Gastrocnemius medialis (tissue), 4 donors: ENCODE measurements at regions of chr22 and their contacts with region 1.

Region 1: DNA sequence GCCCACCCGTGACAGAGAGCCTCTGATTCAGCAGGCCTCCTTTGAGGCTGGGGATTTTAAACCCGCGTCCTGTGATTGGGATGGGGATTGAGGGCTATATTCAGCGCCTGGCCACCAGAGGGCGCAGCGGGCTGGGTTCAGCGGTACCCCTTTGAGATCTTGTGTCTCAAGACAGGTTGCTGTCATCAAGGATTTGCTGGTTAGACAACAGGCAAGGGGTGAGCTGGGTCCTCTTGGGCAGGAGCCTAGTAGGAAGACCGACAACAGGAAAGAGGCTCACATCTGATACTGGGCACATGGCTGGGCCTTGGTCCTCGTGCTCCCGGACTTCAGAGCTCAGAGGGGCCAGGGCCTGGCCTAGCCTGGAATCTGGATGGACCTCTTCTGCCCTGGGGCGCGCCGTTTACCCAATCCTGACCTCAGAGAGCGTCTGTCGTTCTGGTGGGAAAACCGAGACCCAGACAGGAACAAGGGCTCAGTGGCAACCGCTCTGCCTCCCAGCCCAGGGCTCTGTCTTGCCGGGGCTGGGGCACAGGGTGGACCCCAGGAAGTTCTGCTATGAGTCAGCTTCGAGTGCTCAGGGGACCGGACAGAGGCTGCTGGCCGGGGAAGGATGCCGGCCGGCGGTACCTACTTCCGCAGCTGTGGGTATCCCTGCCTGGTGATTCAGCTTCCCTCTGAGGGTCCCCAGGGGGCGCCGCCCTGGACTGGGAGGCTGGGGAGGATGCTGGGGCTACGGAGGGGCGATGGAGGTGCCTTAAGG is 929 bp upstream of the SLC35E4 start:
- DNase-seq: peak; percentile 78 to 85
- ATAC-seq: peak; percentile 75 to 77
- H3K4me3 ChIP-seq: peak overlapping the region; percentile 67 to 96 (median 78)
- H3K27ac ChIP-seq: peak overlapping the region; percentile 95 to 99 (median 98)
- H3K4me1 ChIP-seq: peaks cover 36 to 39% of the 10 kb centered on the region in 2 donors
- H3K27me3 ChIP-seq: no peaks in the 10 kb centered on the region
- CTCF ChIP-seq: peak; percentile 95 to 99 (median 97)
- POLR2A ChIP-seq: peak in 1 of 2 donors; percentile 54

Region 2: GRCh38 chr22:30089655-30089974 is 545.0 kb before region 1 on chr22:
- in situ Hi-C with region 1: no loop called
- intact Hi-C with region 1: no loop called
- DNase-seq: no peak
- ATAC-seq: peak; percentile 36 to 45
- H3K4me3 ChIP-seq: no peak overlapping the region
- H3K27ac ChIP-seq: no peak overlapping the region
- H3K4me1 ChIP-seq: peaks cover 0 to 7% of the 10 kb centered on the region in 2 donors
- H3K27me3 ChIP-seq: peaks cover 0 to 10% (median 2%) of the 10 kb centered on the region in 3 donors
- CTCF ChIP-seq: no peak
- POLR2A ChIP-seq: no peak

Region 3: GRCh38 chr22:30591588-30592359 is 42.9 kb before region 1 on chr22 and contains the start of gene PES1:
- in situ Hi-C with region 1: no loop called
- intact Hi-C with region 1: loop called (anchors 2 kb)
- DNase-seq: peak; percentile 90 to 94
- ATAC-seq: peak; percentile 100
- H3K4me3 ChIP-seq: peak within 1 kb of the TSS; percentile 62 to 94 (median 90)
- H3K27ac ChIP-seq: peak within 1 kb of the TSS; percentile 78 to 94 (median 86)
- H3K4me1 ChIP-seq: peaks cover 13 to 19% of the 10 kb centered on the region in 2 donors
- H3K27me3 ChIP-seq: no peaks in the 10 kb centered on the region
- CTCF ChIP-seq: no peak
- POLR2A ChIP-seq: peak; percentile 44 to 59
- total RNA-seq, gene PES1: 56.3 to 72.0 (median 65.8) TPM

Region 4: DNA sequence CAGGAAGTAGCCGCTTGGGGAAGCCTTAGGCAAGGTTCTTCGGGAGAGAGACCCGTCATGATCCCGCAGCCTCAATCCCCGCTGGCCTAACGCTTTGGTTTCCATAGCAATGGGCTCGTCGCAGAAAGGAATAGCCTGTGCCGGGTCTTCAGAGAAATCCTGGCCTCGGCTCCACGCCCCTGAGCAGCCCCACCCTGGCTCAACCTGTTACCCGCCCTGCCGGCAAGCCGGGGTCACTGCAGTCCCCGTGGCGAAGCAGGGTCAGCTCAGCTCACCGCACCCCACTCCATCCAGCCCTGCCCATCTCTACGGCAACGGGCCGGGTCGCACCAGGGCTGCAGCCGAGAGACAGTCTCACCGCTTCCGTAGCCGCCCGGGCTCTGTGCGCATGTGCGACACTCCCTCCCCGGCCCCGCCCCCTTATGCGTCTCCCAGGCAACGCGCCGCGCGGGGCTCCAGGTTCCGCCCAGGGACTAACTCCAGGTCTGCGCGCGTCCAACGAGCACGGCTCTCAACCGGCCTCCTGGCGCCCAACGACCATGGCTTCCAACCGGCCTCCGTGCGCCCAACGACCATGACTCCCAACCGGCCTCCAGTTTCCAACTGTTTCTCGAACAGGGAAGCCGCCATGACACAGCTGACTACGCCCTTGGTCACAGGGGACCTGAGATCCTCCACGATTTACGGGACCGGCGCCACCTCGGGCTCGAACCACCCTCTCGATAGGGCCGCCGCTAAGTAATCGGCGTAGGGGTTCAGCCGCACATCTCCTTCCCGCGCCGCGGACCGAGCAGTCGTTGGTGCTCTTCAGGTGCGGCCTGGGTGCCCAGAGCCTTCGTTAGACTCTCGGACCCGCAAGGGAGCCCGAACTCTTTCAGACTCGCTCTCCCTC is 33.1 kb after region 1 on chr22 and contains the start of gene DUSP18:
- in situ Hi-C with region 1: no loop called
- intact Hi-C with region 1: loop called (anchors 1 kb)
- DNase-seq: peak; percentile 85 to 88
- ATAC-seq: peak; percentile 97
- H3K4me3 ChIP-seq: peak within 1 kb of the TSS; percentile 64 to 94 (median 84)
- H3K27ac ChIP-seq: peak within 1 kb of the TSS; percentile 37 to 68 (median 52)
- H3K4me1 ChIP-seq: peaks cover 10 to 11% of the 10 kb centered on the region in 2 donors
- H3K27me3 ChIP-seq: no peaks in the 10 kb centered on the region
- CTCF ChIP-seq: peak; percentile 6 to 57 (median 37)
- POLR2A ChIP-seq: peak; percentile 16 to 33
- total RNA-seq, gene DUSP18: 0.82 to 4.3 (median 2.0) TPM

Region 5: DNA sequence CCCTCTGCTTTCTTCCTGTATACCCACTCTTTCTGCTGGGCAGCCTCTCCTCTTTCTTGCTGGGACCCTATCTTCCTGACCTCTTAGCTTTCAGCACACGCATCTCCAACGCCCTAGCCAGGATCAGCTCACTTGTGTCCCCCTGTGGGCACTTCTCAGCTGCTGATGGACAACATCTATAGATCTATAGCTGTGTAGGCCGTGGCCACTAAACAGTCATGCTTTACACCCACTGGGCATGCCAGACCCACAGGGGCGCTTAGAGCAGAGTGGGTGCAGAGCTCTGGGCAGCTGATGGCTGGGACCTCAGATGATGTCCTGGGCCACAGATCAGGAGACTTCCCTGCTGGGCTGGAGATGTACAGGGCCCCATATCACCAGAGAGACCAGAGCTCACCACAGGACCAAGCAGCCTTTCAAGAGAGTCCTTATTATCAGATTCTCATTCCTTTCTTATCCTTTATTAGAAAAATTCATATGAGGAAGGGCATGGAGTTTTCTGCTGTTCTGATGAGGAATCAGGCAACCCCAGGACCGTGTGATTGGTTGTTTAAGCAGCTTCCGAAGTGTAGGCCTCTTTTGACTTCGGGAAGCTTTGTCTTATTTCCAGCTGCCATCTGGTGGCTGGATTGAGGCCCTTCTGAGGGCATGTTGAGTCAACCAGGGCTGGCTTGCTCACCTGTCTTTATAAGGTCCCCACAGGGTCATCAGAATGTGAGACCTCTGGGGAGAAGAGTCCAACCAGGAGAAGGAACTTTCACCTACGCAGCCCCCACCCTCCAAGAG is 120.5 kb after region 1 on chr22:
- in situ Hi-C with region 1: loop called (anchors 5 kb)
- intact Hi-C with region 1: no loop called
- DNase-seq: peak; percentile 18 to 40
- ATAC-seq: peak; percentile 87 to 90
- H3K4me3 ChIP-seq: no peak overlapping the region
- H3K27ac ChIP-seq: no peak overlapping the region
- H3K4me1 ChIP-seq: no peaks in the 10 kb centered on the region
- H3K27me3 ChIP-seq: no peaks in the 10 kb centered on the region
- CTCF ChIP-seq: peak; percentile 46 to 78 (median 74)
- POLR2A ChIP-seq: no peak

Region 6: DNA sequence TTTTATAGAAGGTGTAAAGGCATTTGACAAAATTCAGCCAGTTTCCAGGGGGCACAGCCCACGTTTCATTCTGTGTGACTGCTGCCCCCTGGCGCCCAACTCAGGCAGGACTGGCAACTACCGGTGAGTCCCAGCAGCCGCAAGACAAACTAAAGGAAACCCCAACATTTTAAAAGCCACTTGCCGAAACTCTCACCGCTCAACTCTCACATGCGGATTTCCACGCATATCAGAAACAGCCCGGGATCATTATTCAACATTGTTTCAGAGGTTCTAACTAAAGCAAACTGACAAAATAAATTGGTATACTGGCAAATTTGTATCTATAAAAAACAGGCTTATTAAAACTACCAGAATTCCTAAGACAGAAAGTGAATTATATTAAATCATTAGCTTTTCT is 285.8 kb after region 1 on chr22:
- in situ Hi-C with region 1: loop called (anchors 10 to 25 kb)
- intact Hi-C with region 1: loop called (anchors 1 kb)
- DNase-seq: peak; percentile 32 to 49
- ATAC-seq: peak in 1 of 2 donors; percentile 54
- H3K4me3 ChIP-seq: peak overlapping the region in 1 of 4 donors; percentile 5
- H3K27ac ChIP-seq: no peak overlapping the region
- H3K4me1 ChIP-seq: peaks cover 0 to 13% of the 10 kb centered on the region in 2 donors
- H3K27me3 ChIP-seq: no peaks in the 10 kb centered on the region
- CTCF ChIP-seq: peak; percentile 65 to 92 (median 78)
- POLR2A ChIP-seq: no peak

Region 7: GRCh38 chr22:31080848-31081649 is 446.4 kb after region 1 on chr22 and contains the start of gene SMTN:
- in situ Hi-C with region 1: no loop called
- intact Hi-C with region 1: loop called (anchors 1 kb)
- DNase-seq: peak; percentile 83 to 88
- ATAC-seq: peak; percentile 82 to 83
- H3K4me3 ChIP-seq: peak within 1 kb of the TSS; percentile 60 to 78 (median 73)
- H3K27ac ChIP-seq: peak within 1 kb of the TSS; percentile 85 to 93 (median 92)
- H3K4me1 ChIP-seq: peaks cover 13 to 49% of the 10 kb centered on the region in 2 donors
- H3K27me3 ChIP-seq: no peaks in the 10 kb centered on the region
- CTCF ChIP-seq: no peak
- POLR2A ChIP-seq: peak; percentile 87 to 95
- total RNA-seq, gene SMTN: 39.5 to 104 (median 45.3) TPM

Region 8: DNA sequence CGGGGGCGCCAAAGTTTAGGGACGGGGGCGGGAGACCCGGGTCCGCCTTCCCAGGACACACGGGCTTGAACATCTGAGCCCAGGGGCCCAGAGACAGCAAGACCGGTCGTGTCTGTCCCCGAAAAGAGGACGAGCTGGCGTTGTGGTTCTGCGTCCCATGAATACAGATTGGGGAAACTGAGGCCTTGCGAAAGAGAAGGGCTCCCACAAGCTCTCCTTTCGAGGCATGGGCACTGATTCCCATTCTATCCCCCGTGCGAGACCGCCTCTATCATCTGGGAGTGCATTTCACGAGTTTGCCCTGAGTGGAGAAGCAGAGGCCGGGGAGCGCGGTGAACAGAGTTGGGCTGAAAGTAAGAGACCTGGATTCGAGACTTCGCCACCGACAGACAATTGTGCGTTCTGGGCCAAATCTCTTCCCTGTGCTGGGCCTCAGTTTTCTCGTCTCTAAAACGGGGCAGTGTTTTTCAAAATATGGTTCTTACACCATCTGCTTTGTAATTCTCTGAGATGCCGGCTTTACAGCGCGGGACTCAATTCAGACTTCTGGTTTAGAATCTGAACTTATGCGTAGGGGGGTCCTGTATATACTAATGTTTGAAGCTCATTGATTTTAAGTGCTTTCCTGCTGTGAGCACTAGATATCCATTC is 525.8 kb after region 1 on chr22:
- in situ Hi-C with region 1: no loop called
- intact Hi-C with region 1: loop called (anchors 1 kb)
- DNase-seq: no peak
- ATAC-seq: peak; percentile 60 to 64
- H3K4me3 ChIP-seq: peak overlapping the region; percentile 72 to 98 (median 87)
- H3K27ac ChIP-seq: peak overlapping the region; percentile 95 to 99 (median 97)
- H3K4me1 ChIP-seq: peaks cover 24 to 38% of the 10 kb centered on the region in 2 donors
- H3K27me3 ChIP-seq: no peaks in the 10 kb centered on the region
- CTCF ChIP-seq: no peak
- POLR2A ChIP-seq: no peak